WTC11 (cell line): ENCODE measurements at regions of chr11 and their contacts with region 1.

Region 1: DNA sequence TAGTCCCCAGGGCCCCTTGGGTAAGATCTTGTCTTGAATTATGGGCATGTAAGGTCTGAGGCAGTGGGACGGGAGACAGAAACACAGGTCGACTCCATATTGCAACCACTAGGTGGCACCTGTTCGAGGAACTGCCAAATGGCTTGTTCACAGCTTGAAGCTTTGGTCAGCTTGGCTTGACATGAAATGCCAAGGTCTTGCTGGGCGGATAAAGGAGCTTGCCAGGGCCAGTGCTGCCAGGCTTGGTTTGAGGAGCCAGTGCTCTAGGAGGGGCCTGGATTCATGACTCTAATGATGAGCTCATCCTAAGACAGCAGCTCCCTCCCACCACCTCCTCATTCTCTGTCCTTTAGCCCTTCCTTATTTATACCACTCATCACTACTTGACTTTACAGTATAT is 11.9 kb upstream of the NRIP3 start:
- DNase-seq: peak; percentile 70
- ATAC-seq: peak; percentile 96
- H3K4me3 Mint-ChIP-seq: no peak overlapping the region
- H3K27ac Mint-ChIP-seq: no peak overlapping the region
- H3K4me1 Mint-ChIP-seq: peaks cover 4% of the 10 kb centered on the region
- H3K27me3 Mint-ChIP-seq: no peaks in the 10 kb centered on the region; the same call in 1 of the 2 replicates
- CTCF ChIP-seq: peak; percentile 80

Region 2: DNA sequence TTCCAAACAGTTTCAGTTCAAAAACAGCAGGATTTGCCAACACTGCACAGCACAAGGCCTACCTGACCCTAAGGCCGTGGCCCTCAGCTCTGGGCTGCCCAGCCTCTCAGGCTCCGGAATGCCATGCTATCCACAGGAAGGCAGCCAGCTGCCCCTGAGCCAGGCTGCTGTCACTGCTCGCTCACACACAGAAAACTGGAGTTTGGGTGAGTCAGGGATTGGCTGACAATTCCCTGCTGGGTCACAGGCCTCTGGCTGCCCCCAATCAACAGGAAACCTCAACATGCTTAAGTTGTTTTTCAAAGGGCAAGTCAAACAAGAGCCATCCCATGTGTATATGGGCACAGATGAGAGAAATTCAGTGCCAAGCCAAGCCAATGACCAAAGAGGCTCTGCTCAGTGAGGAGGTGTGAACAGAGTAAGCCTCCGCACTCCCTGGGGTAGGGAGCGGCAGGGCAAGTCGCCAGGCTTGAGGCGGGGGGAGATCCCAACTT is 282.9 kb before region 1 on chr11:
- CTCF ChIA-PET with region 1: no interaction called
- POLR2A ChIA-PET with region 1: no interaction called
- DNase-seq: no peak
- ATAC-seq: peak; percentile 35
- H3K4me3 Mint-ChIP-seq: no peak overlapping the region
- H3K27ac Mint-ChIP-seq: 0 out of 2 replicates have a peak overlapping the region, but pooled peaks have one; percentile 66
- H3K4me1 Mint-ChIP-seq: peaks cover 5% of the 10 kb centered on the region; the same call in 1 of the 2 replicates
- H3K27me3 Mint-ChIP-seq: no peaks in the 10 kb centered on the region
- CTCF ChIP-seq: no peak

Region 3: GRCh38 chr11:8948886-8949285 is 66.8 kb before region 1 on chr11:
- CTCF ChIA-PET with region 1: no interaction called
- POLR2A ChIA-PET with region 1: no interaction called
- DNase-seq: no peak
- ATAC-seq: peak; percentile 46; the same call in 1 of the 2 replicates
- H3K4me3 Mint-ChIP-seq: no peak overlapping the region
- H3K27ac Mint-ChIP-seq: no peak overlapping the region
- H3K4me1 Mint-ChIP-seq: peaks cover 7% of the 10 kb centered on the region; the same call in 1 of the 2 replicates
- H3K27me3 Mint-ChIP-seq: no peaks in the 10 kb centered on the region
- CTCF ChIP-seq: no peak

Region 4: GRCh38 chr11:9030601-9031000 is 14.9 kb after region 1 on chr11:
- CTCF ChIA-PET with region 1: interaction called, 37 read pairs
- POLR2A ChIA-PET with region 1: no interaction called
- DNase-seq: no peak
- ATAC-seq: no peak
- H3K4me3 Mint-ChIP-seq: no peak overlapping the region
- H3K27ac Mint-ChIP-seq: no peak overlapping the region
- H3K4me1 Mint-ChIP-seq: no peaks in the 10 kb centered on the region
- H3K27me3 Mint-ChIP-seq: no peaks in the 10 kb centered on the region; the same call in 1 of the 2 replicates
- CTCF ChIP-seq: no peak

Region 5: DNA sequence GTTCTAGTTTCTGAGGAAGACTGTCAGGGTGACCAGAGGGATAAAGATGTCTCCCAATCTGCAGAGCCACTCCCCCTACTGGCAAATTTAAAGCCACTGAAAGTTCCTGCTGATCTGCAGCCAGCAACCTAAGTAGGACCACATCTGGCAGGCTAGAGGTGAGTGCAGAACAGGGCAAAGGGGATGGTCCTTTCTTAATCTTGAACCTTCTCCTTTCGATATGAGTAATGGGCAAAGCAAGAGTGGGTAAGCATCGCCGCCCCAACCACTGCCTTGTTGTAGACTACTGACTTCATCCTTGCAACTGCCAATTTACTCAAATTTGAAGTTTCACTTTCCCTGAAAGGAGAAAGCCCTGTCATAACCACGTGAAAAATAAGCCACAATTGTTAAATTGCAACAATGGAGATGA is 45.0 kb after region 1 on chr11:
- CTCF ChIA-PET with region 1: interaction called, 23 read pairs
- POLR2A ChIA-PET with region 1: no interaction called
- DNase-seq: peak; percentile 41
- ATAC-seq: peak; percentile 88
- H3K4me3 Mint-ChIP-seq: no peak overlapping the region
- H3K27ac Mint-ChIP-seq: no peak overlapping the region
- H3K4me1 Mint-ChIP-seq: peaks cover 11% of the 10 kb centered on the region; the same call in 1 of the 2 replicates
- H3K27me3 Mint-ChIP-seq: no peaks in the 10 kb centered on the region
- CTCF ChIP-seq: no peak

Region 6: GRCh38 chr11:9092853-9093778 is 77.4 kb after region 1 on chr11:
- CTCF ChIA-PET with region 1: interaction called, 21 read pairs
- POLR2A ChIA-PET with region 1: no interaction called
- DNase-seq: no peak
- ATAC-seq: no peak
- H3K4me3 Mint-ChIP-seq: peak overlapping the region; percentile 58
- H3K27ac Mint-ChIP-seq: no peak overlapping the region
- H3K4me1 Mint-ChIP-seq: peaks cover 12% of the 10 kb centered on the region
- H3K27me3 Mint-ChIP-seq: peaks cover 49% of the 10 kb centered on the region
- CTCF ChIP-seq: no peak

Region 7: GRCh38 chr11:9231848-9232177 is 216.1 kb after region 1 on chr11:
- CTCF ChIA-PET with region 1: no interaction called
- POLR2A ChIA-PET with region 1: no interaction called
- DNase-seq: no peak
- ATAC-seq: peak; percentile 48; the same call in 1 of the 2 replicates
- H3K4me3 Mint-ChIP-seq: peak overlapping the region; percentile 59
- H3K27ac Mint-ChIP-seq: peak overlapping the region; percentile 84; the same call in 1 of the 2 replicates
- H3K4me1 Mint-ChIP-seq: peaks cover 49% of the 10 kb centered on the region
- H3K27me3 Mint-ChIP-seq: peaks cover 47% of the 10 kb centered on the region
- CTCF ChIP-seq: no peak

Region 8: DNA sequence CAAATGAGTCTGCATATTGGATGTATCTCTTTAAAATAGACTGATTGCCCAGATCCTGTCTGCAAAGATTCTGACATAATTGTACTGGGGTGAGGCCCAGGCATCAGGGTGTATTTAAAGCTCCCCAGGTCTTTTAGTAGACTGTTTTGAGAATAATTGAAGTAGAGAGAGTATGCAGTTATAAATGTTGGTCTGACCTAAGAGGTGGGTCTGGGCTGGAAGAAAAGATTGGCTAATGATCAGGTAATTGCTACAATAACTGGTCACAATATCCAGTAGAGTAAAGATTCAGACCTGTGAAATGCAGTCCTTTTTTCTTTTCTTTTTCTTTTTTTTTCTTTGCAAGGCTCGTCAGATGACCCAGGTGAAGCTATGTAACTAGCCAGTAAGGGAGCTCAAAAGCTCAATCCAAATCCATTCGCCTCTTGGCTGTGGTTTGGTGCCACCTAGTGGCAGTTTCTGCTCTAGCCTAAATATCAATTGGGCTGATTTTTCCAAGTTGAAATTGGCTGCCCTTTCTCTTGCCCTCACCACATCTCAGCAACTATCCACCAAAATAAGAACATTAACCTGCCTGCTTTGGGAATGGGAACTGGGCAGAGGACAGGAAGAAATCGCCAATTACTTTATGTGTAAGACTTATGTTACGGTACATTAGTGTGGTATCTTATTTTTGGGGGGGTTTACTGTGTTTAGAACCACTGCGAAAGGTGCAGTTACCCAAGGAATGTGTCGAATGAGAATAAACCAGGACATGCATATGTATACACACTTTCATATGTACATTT is 491.0 kb after region 1 on chr11:
- CTCF ChIA-PET with region 1: interaction called, 12 read pairs
- POLR2A ChIA-PET with region 1: no interaction called
- DNase-seq: peak; percentile 84
- ATAC-seq: peak; percentile 95
- H3K4me3 Mint-ChIP-seq: peak overlapping the region; percentile 3; the same call in 1 of the 2 replicates
- H3K27ac Mint-ChIP-seq: peak overlapping the region; percentile 95
- H3K4me1 Mint-ChIP-seq: peaks cover 26% of the 10 kb centered on the region
- H3K27me3 Mint-ChIP-seq: no peaks in the 10 kb centered on the region
- CTCF ChIP-seq: peak; percentile 76